Activated CD4-positive, alpha-beta memory T cell treated with anti-CD3 and anti-CD28 coated beads, Interleukin-2, amount 10 ng/mL, durations not matched to agents 7 days and 5 days (primary cell): ENCODE measurements at regions of chr14 and their contacts with region 1.

Region 1: GRCh38 chr14:56491299-56492285 is 88.0 kb upstream of the TMEM260 start:
- DNase-seq: no peak
- H3K4me3 Mint-ChIP-seq: no peak overlapping the region
- H3K27ac Mint-ChIP-seq: no peak overlapping the region
- H3K4me1 Mint-ChIP-seq: peaks cover 4% of the 10 kb centered on the region
- H3K27me3 Mint-ChIP-seq: no peaks in the 10 kb centered on the region

Region 2: GRCh38 chr14:56463271-56463890 is 28.2 kb before region 1 on chr14:
- CTCF ChIA-PET with region 1: interaction called, 11 read pairs
- POLR2A ChIA-PET with region 1: no interaction called
- DNase-seq: no peak
- H3K4me3 Mint-ChIP-seq: no peak overlapping the region
- H3K27ac Mint-ChIP-seq: no peak overlapping the region
- H3K4me1 Mint-ChIP-seq: no peaks in the 10 kb centered on the region
- H3K27me3 Mint-ChIP-seq: peaks cover 41% of the 10 kb centered on the region

Region 3: GRCh38 chr14:56474419-56475022 is 17.1 kb before region 1 on chr14:
- CTCF ChIA-PET with region 1: interaction called, 10 read pairs
- POLR2A ChIA-PET with region 1: no interaction called
- DNase-seq: no peak
- H3K4me3 Mint-ChIP-seq: no peak overlapping the region
- H3K27ac Mint-ChIP-seq: no peak overlapping the region
- H3K4me1 Mint-ChIP-seq: no peaks in the 10 kb centered on the region
- H3K27me3 Mint-ChIP-seq: peaks cover 10% of the 10 kb centered on the region

Region 4: DNA sequence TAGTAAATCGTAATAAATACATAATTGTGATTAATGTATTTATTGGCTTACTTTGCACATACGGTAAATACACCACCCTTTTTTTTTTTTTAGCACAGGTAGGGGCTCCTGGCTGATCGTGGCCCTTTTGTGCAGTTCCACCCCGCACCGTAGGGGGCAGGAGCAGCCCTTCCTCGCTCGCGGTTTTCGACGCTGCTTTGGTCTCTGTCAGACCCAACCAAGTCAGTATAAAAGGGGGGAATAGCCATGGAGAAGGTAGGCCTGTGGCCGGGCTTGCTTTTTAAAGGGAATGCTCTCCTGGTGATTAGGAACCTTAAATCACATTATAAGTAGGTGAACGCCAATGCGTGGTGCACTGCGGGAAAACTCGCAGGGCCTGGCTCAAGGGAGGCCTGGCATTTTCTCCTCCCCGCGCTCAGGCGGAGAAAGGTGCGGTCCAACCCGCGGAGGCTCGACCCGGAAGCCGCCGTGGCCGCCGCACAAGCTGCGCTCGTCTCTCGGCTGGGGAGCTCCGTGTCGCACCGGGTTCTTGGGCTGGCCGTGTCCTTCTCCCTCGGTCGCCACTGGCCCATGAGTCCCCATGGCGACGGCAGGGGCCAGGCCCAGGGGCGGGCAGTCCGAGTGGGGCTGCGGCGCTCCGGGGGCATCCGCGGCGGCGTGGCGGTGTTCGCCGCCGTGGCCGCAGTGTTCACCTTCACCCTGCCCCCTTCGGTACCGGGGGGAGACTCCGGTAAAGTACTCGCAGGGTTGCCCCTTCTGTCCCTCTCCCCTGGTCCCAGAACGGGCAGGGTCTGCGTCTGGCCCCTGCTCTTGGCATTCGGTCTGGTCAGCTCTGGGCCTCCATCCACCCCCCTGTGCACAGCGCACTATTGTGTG is 88.0 kb after region 1 on chr14 and contains the start of gene TMEM260:
- CTCF ChIA-PET with region 1: no interaction called
- POLR2A ChIA-PET with region 1: no interaction called
- DNase-seq: peak; percentile 90
- H3K4me3 Mint-ChIP-seq: peak within 1 kb of the TSS; percentile 87
- H3K27ac Mint-ChIP-seq: peak within 1 kb of the TSS; percentile 89
- H3K4me1 Mint-ChIP-seq: peaks cover 33% of the 10 kb centered on the region
- H3K27me3 Mint-ChIP-seq: no peaks in the 10 kb centered on the region
- total RNA-seq, gene TMEM260: 15.1 to 19.4 TPM

Region 5: GRCh38 chr14:57317316-57317715 is 825.7 kb after region 1 on chr14:
- CTCF ChIA-PET with region 1: interaction called, 16 read pairs
- POLR2A ChIA-PET with region 1: no interaction called
- DNase-seq: peak; percentile 70
- H3K4me3 Mint-ChIP-seq: no peak overlapping the region
- H3K27ac Mint-ChIP-seq: no peak overlapping the region
- H3K4me1 Mint-ChIP-seq: peaks cover 4% of the 10 kb centered on the region
- H3K27me3 Mint-ChIP-seq: peaks cover 2% of the 10 kb centered on the region